Heart right ventricle (tissue), 16 donors: ENCODE measurements at regions of chr2 and their contacts with region 1.

Region 1: DNA sequence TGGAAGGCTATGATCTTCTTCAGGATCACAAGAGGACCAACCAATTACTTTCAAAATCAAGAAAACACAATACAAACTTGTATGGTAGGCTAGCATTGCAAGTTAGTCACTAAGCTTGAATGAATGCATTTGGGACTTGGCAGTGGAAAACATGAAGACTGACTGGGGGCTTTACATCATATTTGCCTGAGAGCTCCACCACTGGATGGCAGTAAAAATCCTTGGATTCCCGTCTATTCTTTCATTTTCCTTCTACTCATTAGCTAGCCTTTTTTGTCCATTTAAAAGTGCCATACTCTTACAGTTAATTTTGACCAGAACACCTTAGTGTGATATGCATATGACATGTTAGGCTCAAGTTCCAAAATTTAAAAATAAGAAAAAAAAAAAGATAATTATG is 63.5 kb upstream of the RASGRP3 start:
- DNase-seq: peak in 1 of 2 donors; percentile 35
- ATAC-seq: peak in 7 of 8 donors; percentile 35 to 64 (median 58)
- H3K4me3 ChIP-seq: no peak overlapping the region
- H3K27ac ChIP-seq: no peak overlapping the region
- H3K4me1 ChIP-seq: peaks cover 0 to 13% (median 0%) of the 10 kb centered on the region in 9 donors
- H3K27me3 ChIP-seq: no peaks in the 10 kb centered on the region
- CTCF ChIP-seq: peak in 8 of 9 donors; percentile 25 to 75 (median 58)

Region 2: DNA sequence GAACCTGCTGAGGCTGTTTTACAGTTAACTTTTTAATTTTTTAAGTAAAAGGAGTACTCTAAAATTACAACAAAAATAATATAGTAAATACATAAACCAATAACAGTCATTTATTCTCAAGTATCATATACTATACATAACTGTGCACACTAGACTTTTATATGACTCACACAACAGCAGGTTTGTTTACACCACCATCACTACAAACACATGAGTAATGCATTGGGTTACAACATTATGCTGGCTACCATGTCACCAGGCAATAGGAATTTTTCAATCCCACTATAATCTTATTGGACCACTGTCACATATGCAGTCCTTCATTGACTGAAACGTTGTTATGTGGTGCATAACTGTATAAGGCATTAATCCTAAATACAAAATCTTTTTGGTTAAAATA is 106.0 kb after region 1 on chr2:
- intact Hi-C with region 1: no loop called
- DNase-seq: no peak
- ATAC-seq: peak in 1 of 8 donors; percentile 11
- H3K4me3 ChIP-seq: no peak overlapping the region
- H3K27ac ChIP-seq: no peak overlapping the region
- H3K4me1 ChIP-seq: peaks cover 0 to 19% (median 15%) of the 10 kb centered on the region in 9 donors
- H3K27me3 ChIP-seq: no peaks in the 10 kb centered on the region
- CTCF ChIP-seq: no peak

Region 3: DNA sequence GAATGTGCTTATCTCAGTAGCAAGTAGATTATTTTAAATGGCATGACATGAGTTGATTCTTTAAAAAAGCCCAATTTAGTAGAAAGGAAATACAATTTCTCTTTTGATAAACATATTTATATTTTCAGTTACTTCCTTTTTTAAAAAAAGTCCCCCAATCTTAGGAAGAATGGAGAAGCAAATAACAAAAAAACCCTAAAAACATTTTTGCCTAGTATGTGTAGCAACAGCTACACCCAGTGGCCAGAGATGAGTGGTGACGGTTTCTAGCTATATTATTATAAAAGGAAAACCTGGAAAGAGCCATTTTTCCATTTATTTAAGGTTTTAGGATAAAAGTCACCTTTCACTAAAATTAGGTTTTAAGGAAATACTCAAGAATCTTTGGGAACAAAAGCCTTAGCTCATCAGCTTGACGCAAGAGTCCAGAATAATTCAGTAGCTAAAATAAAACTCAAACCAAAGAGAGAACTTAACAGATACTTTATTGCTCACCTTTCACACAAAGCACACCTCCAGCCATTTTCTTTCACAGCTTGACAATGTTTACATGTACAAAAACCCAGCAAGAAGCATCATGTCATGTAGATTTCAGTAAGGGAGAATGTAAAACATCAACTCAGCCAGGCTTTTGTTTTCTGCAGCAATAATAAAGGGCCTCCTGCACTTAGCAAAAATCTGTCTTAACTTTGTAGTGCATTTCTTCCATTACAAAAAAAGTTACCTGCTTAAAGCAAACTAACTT is 170.4 kb after region 1 on chr2:
- intact Hi-C with region 1: loop called in 9 of 10 experiments (anchors 2 to 10 kb)
- DNase-seq: peak in 1 of 2 donors; percentile 27
- ATAC-seq: peak in 4 of 8 donors; percentile 41 to 67 (median 50)
- H3K4me3 ChIP-seq: no peak overlapping the region
- H3K27ac ChIP-seq: peak overlapping the region in 2 of 10 donors; percentile 3 to 32
- H3K4me1 ChIP-seq: peaks cover 0 to 27% (median 13%) of the 10 kb centered on the region in 9 donors
- H3K27me3 ChIP-seq: no peaks in the 10 kb centered on the region
- CTCF ChIP-seq: peak; percentile 73 to 89 (median 81)

Region 4: DNA sequence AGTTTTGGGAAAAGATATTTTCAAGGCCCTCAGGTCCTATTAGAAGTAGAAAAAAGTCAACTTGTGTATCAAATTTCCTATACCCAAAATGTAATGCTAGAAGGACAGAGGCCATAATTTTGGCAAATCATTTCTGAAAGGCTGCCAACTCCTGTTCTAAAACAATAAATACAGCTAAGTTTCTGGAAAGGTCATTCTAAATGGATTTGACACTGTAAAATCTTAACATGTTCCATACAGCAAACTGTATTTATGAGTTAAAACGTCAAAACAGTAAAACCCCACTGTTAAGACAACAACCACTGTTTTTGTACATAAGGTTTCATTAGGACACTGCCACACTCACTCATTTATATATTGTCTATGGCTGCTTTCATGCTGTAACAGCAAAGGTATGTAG is 176.5 kb after region 1 on chr2:
- intact Hi-C with region 1: loop called in 7 of 10 experiments (anchors 5 to 10 kb)
- DNase-seq: no peak
- ATAC-seq: peak in 1 of 8 donors; percentile 5
- H3K4me3 ChIP-seq: no peak overlapping the region
- H3K27ac ChIP-seq: peak overlapping the region in 3 of 10 donors; percentile 8 to 27 (median 12)
- H3K4me1 ChIP-seq: peaks cover 0 to 37% (median 11%) of the 10 kb centered on the region in 9 donors
- H3K27me3 ChIP-seq: no peaks in the 10 kb centered on the region
- CTCF ChIP-seq: no peak